ENCODE measurements at regions of chr6 and their contacts with region 1.

Region 1: DNA sequence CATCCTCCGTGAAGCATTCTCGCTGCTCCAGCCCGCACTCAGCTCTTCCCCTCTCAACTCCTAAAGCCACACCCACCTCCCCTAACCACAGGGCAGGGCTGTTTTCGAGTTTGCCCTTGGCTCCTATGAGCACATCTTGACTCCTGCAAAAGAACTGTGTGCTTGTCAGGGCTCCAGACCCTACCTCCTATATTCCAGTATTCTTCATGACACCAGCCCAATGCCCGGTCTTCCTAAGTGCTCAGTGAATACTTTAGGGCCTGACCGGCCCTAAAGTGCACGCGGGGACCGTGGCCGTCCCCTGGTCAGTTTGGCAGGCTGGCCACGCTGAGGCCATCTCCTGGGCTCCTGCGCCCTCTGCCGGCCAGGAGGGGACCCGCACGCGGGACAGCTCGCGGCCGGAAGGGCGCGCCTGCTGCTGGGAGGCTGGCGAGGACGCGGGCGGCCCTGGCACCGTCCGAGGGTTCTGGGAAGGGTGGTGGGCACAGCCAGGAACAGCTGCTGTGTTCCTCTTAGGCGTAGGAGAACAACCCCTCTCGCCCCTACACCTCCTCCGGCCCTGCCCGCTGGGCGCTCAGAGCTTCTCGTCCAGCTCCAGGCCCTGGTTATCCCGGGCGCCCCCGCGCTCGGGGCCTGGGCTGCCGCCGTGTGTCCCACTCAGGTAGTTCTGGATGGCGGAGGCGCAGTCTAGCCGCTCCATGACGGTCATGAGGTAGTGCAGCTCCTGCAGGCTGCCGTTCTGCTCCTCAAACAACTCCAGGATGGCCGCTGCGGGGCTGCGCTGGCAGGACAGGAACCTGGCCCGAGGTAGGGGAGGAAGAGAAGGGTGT is 11.0 kb downstream of the UNC5CL start:
- DNase-seq: peak; percentile 89
- ATAC-seq: peak; percentile 88
- H3K4me3 Mint-ChIP-seq: peak overlapping the region; percentile 73
- H3K27ac Mint-ChIP-seq: peak overlapping the region; percentile 77
- H3K4me1 Mint-ChIP-seq: peaks cover 17% of the 10 kb centered on the region
- H3K27me3 Mint-ChIP-seq: no peaks in the 10 kb centered on the region

Region 2: GRCh38 chr6:40912158-40912946 is 115.7 kb before region 1 on chr6:
- CTCF ChIA-PET with region 1: no interaction called
- POLR2A ChIA-PET with region 1: no interaction called
- intact Hi-C with region 1: loop called in 1 of 2 experiments (anchors 5 kb)
- DNase-seq: peak; percentile 64
- ATAC-seq: peak; percentile 82
- H3K4me3 Mint-ChIP-seq: no peak overlapping the region
- H3K27ac Mint-ChIP-seq: no peak overlapping the region
- H3K4me1 Mint-ChIP-seq: peaks cover 7% of the 10 kb centered on the region
- H3K27me3 Mint-ChIP-seq: peaks cover 11% of the 10 kb centered on the region

Region 3: GRCh38 chr6:40999569-40999968 is 28.4 kb before region 1 on chr6:
- CTCF ChIA-PET with region 1: interaction called, 10 read pairs
- POLR2A ChIA-PET with region 1: interaction called, 5 read pairs
- intact Hi-C with region 1: no loop called
- DNase-seq: peak; percentile 30
- ATAC-seq: no peak
- H3K4me3 Mint-ChIP-seq: no peak overlapping the region
- H3K27ac Mint-ChIP-seq: no peak overlapping the region
- H3K4me1 Mint-ChIP-seq: no peaks in the 10 kb centered on the region
- H3K27me3 Mint-ChIP-seq: peaks cover 20% of the 10 kb centered on the region

Region 4: GRCh38 chr6:41039060-41039998 is 11.3 kb after region 1 on chr6 and contains the start of gene UNC5CL:
- CTCF ChIA-PET with region 1: interaction called, 27 read pairs
- POLR2A ChIA-PET with region 1: no interaction called
- intact Hi-C with region 1: no loop called
- DNase-seq: peak; percentile 79
- ATAC-seq: peak; percentile 77
- H3K4me3 Mint-ChIP-seq: no peak within 1 kb of the TSS
- H3K27ac Mint-ChIP-seq: no peak within 1 kb of the TSS
- H3K4me1 Mint-ChIP-seq: peaks cover 8% of the 10 kb centered on the region
- H3K27me3 Mint-ChIP-seq: no peaks in the 10 kb centered on the region
- total RNA-seq, gene UNC5CL: 1.8 to 1.9 TPM

Region 5: GRCh38 chr6:41150669-41151068 is 122.7 kb after region 1 on chr6:
- CTCF ChIA-PET with region 1: no interaction called
- POLR2A ChIA-PET with region 1: no interaction called
- intact Hi-C with region 1: no loop called
- DNase-seq: no peak
- ATAC-seq: no peak
- H3K4me3 Mint-ChIP-seq: no peak overlapping the region
- H3K27ac Mint-ChIP-seq: no peak overlapping the region
- H3K4me1 Mint-ChIP-seq: peaks cover 9% of the 10 kb centered on the region
- H3K27me3 Mint-ChIP-seq: no peaks in the 10 kb centered on the region

Region 6: DNA sequence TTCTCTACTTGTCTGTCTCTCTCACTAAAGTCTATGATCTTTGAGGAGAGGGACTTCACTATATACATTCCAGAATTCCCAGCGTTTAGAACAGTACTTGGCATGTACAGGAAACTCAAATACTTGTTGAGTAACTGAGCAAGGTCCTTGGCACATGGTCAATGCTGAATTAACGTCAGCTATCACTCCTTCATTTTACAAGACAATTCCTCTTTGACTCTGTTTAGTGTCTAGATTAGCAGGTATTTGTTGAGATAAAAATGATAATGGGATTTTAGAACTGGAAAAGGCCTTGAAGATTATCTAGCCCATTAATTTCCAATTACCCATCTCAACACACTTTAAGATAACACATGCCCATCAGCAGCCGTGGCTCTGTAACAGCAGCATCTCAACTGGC is 1173.4 kb after region 1 on chr6:
- CTCF ChIA-PET with region 1: no interaction called
- POLR2A ChIA-PET with region 1: no interaction called
- intact Hi-C with region 1: no loop called
- DNase-seq: no peak
- ATAC-seq: no peak
- H3K4me3 Mint-ChIP-seq: no peak overlapping the region
- H3K27ac Mint-ChIP-seq: no peak overlapping the region
- H3K4me1 Mint-ChIP-seq: peaks cover 2% of the 10 kb centered on the region
- H3K27me3 Mint-ChIP-seq: no peaks in the 10 kb centered on the region

Measured in activated CD4-positive, alpha-beta T cell treated with anti-CD3 and anti-CD28 coated beads for 36 hours (primary cell).